ENCODE measurements at regions of chr1 and their contacts with region 1.

Region 1: DNA sequence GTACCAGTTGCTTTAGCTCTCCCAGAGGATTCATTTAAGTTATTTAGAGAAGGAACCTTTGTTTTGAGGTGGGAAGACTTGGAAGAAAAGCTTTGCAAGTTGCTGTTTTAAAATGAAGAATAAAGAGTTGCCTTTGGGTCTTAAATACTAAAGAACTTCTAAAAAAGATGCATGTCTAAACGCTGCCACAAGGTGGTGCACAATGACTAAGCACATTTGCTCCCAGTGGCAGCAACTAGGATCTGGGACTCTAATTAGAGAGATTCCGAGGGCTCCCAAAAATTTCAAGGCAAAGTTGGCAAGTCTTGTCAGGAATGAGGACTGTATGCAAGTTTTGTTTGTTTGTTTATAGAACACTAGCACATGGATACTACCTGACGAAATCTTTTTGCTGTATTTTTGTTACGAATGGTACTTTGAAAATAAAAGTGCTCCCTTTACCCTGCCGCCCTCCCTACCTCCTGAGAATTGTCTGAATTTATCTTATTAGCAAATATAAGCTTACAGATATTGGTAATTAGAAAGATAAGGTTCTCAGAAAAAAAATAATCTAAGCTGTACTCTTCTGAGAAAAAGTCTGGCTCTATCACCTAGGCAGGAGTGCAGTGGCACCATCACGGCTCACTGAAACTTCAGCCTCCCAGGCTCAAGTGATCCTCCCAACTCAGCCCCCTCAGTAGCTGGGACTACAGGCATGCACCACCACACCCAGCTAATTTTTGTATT is 121.8 kb downstream of the HFM1 start:
- DNase-seq: peak; percentile 79
- H3K4me3 Mint-ChIP-seq: no peak overlapping the region
- H3K27ac Mint-ChIP-seq: no peak overlapping the region
- H3K4me1 Mint-ChIP-seq: no peaks in the 10 kb centered on the region
- H3K27me3 Mint-ChIP-seq: peaks cover 10% of the 10 kb centered on the region

Region 2: GRCh38 chr1:91261655-91262054 is 21.2 kb before region 1 on chr1:
- intact Hi-C with region 1: no loop called
- DNase-seq: no peak
- H3K4me3 Mint-ChIP-seq: no peak overlapping the region
- H3K27ac Mint-ChIP-seq: no peak overlapping the region
- H3K4me1 Mint-ChIP-seq: no peaks in the 10 kb centered on the region
- H3K27me3 Mint-ChIP-seq: peaks cover 11% of the 10 kb centered on the region

Region 3: GRCh38 chr1:91404151-91405012 is 121.5 kb after region 1 on chr1 and contains the start of gene HFM1:
- intact Hi-C with region 1: loop called (anchors 2 kb)
- DNase-seq: peak; percentile 79
- H3K4me3 Mint-ChIP-seq: peak within 1 kb of the TSS; percentile 59
- H3K27ac Mint-ChIP-seq: no peak within 1 kb of the TSS
- H3K4me1 Mint-ChIP-seq: peaks cover 4% of the 10 kb centered on the region
- H3K27me3 Mint-ChIP-seq: peaks cover 65% of the 10 kb centered on the region
- total RNA-seq, gene HFM1: not detected in 2 replicates

Region 4: DNA sequence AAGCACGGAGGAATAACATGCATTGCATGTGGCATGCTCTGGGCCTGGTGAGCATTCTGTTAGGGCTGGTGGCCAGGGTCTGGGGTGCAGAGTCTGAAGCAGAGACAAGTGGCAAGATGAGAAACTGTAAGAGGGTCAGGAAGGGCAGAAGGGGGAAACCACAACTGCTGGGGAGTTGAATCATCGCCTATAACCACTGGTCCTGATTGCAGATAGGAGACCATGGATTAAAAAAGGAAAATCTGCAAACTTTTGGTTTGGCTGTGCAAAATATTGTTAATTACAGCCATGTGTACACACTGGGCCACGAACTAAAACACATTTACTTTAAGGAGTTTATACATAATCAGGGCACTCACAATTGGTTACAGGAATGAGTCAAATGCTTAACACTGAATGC is 526.5 kb after region 1 on chr1:
- intact Hi-C with region 1: no loop called
- DNase-seq: no peak
- H3K4me3 Mint-ChIP-seq: no peak overlapping the region
- H3K27ac Mint-ChIP-seq: no peak overlapping the region
- H3K4me1 Mint-ChIP-seq: peaks cover 45% of the 10 kb centered on the region
- H3K27me3 Mint-ChIP-seq: peaks cover 17% of the 10 kb centered on the region

Region 5: GRCh38 chr1:91924146-91924545 is 641.3 kb after region 1 on chr1:
- intact Hi-C with region 1: loop called (anchors 1 kb)
- DNase-seq: no peak
- H3K4me3 Mint-ChIP-seq: no peak overlapping the region
- H3K27ac Mint-ChIP-seq: peak overlapping the region; percentile 6
- H3K4me1 Mint-ChIP-seq: peaks cover 7% of the 10 kb centered on the region
- H3K27me3 Mint-ChIP-seq: peaks cover 10% of the 10 kb centered on the region

Region 6: GRCh38 chr1:92291372-92291999 is 1008.6 kb after region 1 on chr1:
- intact Hi-C with region 1: loop called (anchors 5 kb)
- DNase-seq: peak; percentile 73
- H3K4me3 Mint-ChIP-seq: no peak overlapping the region
- H3K27ac Mint-ChIP-seq: no peak overlapping the region
- H3K4me1 Mint-ChIP-seq: peaks cover 21% of the 10 kb centered on the region
- H3K27me3 Mint-ChIP-seq: no peaks in the 10 kb centered on the region